ENCODE measurements at regions of chr6 and their contacts with region 1.

Region 1: DNA sequence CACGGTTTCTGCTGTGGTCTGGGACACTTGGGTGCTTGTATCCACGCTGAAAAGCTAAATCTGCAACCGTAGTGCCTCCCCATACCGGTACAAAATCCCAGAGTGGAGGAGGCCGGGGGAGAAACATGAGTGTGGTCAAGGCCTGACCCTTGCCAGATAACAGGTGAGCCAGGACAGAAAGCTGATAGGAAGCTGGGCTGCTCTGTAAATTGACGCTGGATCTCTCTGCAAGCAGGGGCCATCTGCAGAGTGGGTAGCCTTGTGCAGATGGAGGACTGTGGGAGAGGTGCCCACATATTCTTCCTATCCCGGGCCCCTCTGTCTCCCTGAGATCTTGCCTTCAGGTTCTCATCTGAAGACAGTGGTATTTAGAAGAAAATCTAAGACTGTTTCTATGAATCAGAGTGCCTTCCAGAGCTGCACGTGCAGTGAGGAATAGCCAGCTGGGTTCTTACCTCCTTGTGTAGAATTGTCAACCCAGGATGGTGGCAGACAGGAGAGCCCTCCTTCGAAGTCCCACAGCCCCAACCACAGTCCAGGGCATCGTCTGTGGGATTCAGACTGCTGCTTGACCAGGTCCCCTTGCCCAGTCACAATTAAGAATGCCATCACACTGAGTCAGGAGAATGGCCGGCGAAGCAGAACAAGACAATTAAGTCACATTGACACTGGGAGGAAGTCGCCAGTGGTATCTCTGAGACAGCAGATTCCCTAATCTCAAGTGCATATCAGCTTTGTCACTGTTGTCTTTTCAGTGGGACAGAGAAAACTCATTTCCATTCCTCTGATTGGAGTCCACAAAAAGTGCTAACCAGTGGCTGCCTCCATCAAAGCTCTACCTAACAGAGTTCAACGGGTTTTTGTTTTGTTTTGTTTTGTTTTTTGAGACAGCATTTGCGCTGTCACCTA is 100.0 kb upstream of the RIPOR2 start:
- DNase-seq: peak; percentile 24
- H3K4me3 Mint-ChIP-seq: peak overlapping the region; percentile 72
- H3K27ac Mint-ChIP-seq: peak overlapping the region; percentile 89
- H3K4me1 Mint-ChIP-seq: peaks cover 66% of the 10 kb centered on the region
- H3K27me3 Mint-ChIP-seq: no peaks in the 10 kb centered on the region

Region 2: DNA sequence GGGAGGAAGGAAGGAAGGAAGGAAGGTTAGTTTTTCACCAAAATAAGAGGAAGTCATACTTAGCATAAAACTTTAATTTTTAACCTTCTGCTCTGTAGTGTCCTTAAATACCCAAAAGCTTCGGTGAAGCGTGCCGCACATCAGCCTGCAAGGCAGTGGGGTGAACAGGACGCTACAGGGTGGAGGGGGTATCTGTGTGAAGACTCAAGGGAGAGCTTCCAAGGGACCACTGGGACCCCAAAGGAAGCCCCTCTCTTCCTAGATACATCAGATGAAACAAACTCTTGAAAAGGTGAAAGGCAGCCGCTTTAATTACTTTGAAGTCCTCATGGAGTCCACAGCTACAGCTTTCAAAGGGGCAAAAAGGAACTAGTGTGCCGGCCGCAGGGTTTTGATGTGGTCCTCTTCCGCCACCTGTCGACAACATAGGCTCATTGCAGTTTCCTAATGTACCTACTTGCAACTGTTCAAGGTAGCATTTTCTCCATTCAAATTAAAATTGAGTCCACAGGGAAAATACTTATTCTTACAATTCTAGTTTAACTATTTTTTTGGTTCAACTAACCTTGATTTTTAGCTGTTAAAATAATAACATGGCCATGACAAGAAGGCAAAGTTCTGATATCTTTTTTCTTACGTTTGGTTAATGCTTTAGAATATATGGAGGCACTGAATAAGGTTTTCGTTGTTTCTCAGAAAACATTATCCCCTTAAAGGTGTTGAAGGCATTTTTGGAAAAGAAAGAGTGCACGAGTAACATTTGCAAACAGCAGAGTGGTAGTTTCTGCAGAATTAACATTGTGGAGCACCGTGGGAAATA is 35.0 kb after region 1 on chr6:
- CTCF ChIA-PET with region 1: interaction called, 14 read pairs
- POLR2A ChIA-PET with region 1: interaction called, 3 read pairs
- DNase-seq: peak; percentile 85
- H3K4me3 Mint-ChIP-seq: no peak overlapping the region
- H3K27ac Mint-ChIP-seq: peak overlapping the region; percentile 86
- H3K4me1 Mint-ChIP-seq: peaks cover 4% of the 10 kb centered on the region
- H3K27me3 Mint-ChIP-seq: peaks cover 3% of the 10 kb centered on the region

Region 3: DNA sequence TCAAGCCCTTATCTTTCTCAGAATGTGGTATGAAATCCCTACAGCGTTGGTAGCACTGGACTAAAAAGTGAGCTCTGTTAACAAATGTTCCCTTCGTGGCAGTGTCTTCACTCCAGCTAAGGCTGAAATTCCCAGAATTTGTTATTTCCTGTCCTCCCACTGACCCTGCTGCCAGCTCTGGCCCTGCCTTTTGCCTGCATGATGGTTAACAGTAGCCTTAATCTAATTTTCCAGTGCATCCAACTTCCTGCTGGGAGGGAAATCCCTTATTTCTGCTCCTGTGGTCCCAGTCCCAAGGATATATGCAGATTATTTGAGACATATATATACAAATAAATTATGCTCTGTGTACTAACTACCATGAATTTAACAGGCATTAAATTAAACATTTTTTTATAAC is 86.2 kb after region 1 on chr6:
- CTCF ChIA-PET with region 1: no interaction called
- POLR2A ChIA-PET with region 1: no interaction called
- DNase-seq: no peak
- H3K4me3 Mint-ChIP-seq: no peak overlapping the region
- H3K27ac Mint-ChIP-seq: no peak overlapping the region
- H3K4me1 Mint-ChIP-seq: peaks cover 56% of the 10 kb centered on the region
- H3K27me3 Mint-ChIP-seq: no peaks in the 10 kb centered on the region